Tibial artery (tissue), 4 donors: ENCODE measurements at regions of chr5 and their contacts with region 1.

Region 1: DNA sequence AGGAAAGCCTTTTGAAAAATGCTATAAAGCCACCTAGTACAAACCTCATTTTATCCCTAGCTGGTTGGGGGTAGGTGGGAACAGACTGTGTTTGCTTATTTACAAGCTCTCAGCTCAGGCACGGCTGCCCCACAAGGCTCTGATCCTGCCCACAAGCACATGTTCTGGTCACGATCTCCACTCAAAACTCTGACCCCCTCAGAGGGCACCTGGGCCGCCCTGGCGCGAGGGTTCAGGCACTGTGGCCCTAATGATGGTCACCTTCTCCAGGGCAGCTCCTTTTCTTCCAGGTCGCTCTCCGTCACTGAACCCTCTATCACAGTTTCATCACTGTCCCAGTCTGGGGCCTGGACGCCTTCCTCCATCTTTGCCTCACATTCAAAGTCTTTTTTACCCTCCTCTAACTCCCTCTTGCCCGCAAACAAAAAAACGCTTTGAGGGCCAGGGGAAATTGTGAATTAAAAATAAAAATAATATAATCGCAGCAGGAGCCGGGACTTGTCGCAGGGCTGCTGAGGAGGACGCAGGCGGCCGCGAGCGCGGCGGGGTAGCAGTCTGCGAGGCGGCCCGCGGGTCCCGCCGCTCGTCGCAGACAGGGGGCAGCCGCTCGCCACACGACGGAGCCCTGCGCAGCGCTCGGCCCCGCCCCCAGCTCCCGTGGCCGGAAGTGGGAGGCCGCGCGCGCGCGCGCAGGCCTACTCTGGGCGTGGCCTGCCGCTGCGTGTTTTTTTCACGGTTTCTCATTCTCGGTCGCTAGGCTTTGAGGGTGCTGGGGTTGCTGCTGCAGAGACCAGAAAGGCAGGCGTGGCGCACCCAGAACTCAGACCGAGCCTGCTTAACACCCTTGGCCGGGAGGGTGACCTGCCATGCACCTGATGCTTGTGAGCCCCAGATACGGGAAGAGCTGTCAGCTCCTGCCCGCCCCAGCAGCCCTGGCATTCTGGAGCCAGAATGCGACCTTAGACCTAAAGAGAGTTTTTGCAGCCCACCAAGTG is at the start of gene ANKRD31:
- DNase-seq: peak; percentile 68 to 90
- H3K4me3 ChIP-seq: peak within 1 kb of the TSS; percentile 60 to 75
- H3K27ac ChIP-seq: peak within 1 kb of the TSS; percentile 73 to 74
- H3K4me1 ChIP-seq: peaks cover 0 to 7% (median 0%) of the 10 kb centered on the region in 4 donors
- H3K27me3 ChIP-seq: no peaks in the 10 kb centered on the region
- CTCF ChIP-seq: peak; percentile 87 to 88

Region 2: DNA sequence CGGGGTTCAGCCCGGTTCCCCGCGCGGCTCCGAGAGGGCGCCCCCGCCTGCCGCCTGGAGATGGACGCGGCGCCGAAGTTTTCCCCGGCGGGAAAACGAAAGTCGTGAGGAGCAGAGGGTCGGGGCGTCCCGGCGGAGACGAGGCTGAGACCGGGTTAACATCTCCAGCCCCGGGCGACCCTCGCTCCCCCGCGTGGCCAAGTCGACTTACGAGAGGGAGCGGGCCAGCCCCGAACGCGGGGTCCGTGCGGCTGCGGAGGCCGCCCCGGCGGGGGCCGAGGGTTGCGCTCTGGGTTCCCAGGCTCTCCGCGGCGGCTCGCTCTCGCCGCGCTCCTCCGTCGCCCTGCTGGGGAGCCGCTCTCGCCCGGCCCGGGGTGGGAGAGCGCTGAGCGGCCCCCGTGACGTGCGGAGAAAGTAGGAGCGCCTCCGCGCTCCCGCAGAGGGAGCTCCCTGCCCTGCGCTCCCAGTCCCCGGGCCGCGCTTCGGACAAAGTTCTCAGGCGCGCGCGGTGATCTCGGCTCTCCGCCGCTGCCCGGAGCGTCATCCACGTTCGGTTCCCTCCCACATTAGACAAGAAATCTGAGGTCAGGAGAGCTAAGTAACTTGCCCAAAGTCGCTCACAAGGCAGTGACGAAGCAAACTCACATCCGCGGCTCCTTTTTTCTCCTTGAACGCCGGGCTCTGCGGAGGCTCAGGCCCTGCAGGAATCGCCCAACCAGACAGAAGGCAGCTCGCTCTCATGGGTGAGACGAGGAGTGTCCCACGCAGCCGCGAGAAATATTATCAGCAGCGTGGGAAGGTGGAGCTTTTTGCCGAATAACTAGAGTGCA is 183.1 kb before region 1 on chr5:
- intact Hi-C with region 1: loop called (anchors 10 kb)
- DNase-seq: peak; percentile 34 to 81
- H3K4me3 ChIP-seq: peak overlapping the region; percentile 79 to 95
- H3K27ac ChIP-seq: peak overlapping the region; percentile 93 to 98
- H3K4me1 ChIP-seq: peaks cover 0 to 45% (median 14%) of the 10 kb centered on the region in 4 donors
- H3K27me3 ChIP-seq: no peaks in the 10 kb centered on the region
- CTCF ChIP-seq: peak in 1 of 2 experiments; percentile 3

Region 3: GRCh38 chr5:75336625-75337339 is 100.2 kb after region 1 on chr5 and contains the start of gene HMGCR:
- intact Hi-C with region 1: loop called (anchors 5 kb)
- DNase-seq: peak; percentile 99
- H3K4me3 ChIP-seq: peak within 1 kb of the TSS; percentile 80 to 91
- H3K27ac ChIP-seq: peak within 1 kb of the TSS; percentile 87 to 88
- H3K4me1 ChIP-seq: peaks cover 0 to 17% (median 6%) of the 10 kb centered on the region in 4 donors
- H3K27me3 ChIP-seq: no peaks in the 10 kb centered on the region
- CTCF ChIP-seq: no peak

Region 4: GRCh38 chr5:75351139-75351926 is 114.7 kb after region 1 on chr5:
- intact Hi-C with region 1: no loop called
- DNase-seq: no peak
- H3K4me3 ChIP-seq: no peak overlapping the region
- H3K27ac ChIP-seq: no peak overlapping the region
- H3K4me1 ChIP-seq: no peaks in the 10 kb centered on the region
- H3K27me3 ChIP-seq: no peaks in the 10 kb centered on the region
- CTCF ChIP-seq: no peak

Region 5: GRCh38 chr5:75681125-75681830 is 444.7 kb after region 1 on chr5:
- intact Hi-C with region 1: loop called (anchors 5 kb)
- DNase-seq: no peak
- H3K4me3 ChIP-seq: no peak overlapping the region
- H3K27ac ChIP-seq: no peak overlapping the region
- H3K4me1 ChIP-seq: peaks cover 0 to 5% (median 0%) of the 10 kb centered on the region in 4 donors
- H3K27me3 ChIP-seq: no peaks in the 10 kb centered on the region
- CTCF ChIP-seq: peak; percentile 68 to 75